HCT116 (cell line): ENCODE measurements at regions of chr3 and their contacts with region 1.

Region 1: DNA sequence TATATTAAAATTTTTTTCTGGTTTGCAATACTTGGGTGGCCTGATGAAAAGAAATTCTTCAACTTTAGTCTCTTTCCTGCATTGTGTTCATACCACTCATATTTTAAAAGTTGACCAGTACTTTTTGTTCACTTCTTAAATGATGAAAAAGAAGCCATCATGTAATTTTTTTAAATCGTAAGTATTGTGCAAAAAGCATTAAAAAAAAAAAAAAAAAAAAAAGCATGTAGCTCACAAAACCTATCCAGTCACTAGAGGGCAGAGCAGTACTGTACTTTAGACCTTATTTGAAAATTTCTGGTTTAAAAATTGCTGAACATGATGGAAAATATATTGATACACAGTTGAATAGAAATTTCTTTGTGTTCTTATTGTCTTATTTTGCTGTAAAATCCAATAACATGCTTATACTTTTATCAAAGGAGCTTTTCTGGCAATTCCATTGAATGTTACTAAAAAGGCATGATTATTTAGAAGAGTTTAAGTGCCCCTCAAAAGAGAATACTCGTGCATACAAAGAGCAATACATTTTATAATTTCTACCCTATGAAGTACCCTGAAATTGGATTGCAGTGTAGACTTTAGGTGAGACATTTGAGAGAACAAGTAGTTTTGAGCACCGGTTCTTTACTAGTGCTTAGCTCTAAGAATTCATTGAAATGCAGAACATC is 137.7 kb downstream of the BBX start:
- DNase-seq: peak; percentile 19
- ATAC-seq: no peak
- H3K4me3 ChIP-seq: no peak overlapping the region
- H3K27ac ChIP-seq: no peak overlapping the region
- H3K4me1 ChIP-seq: no peaks in the 10 kb centered on the region
- H3K27me3 ChIP-seq: no peaks in the 10 kb centered on the region
- CTCF ChIP-seq: peak; percentile 24 to 75 (median 60); a peak in 5 of 6 replicates
- POLR2A ChIP-seq: no peak
- RAD21 ChIP-seq: peak; percentile 42; the same call in 1 of the 2 replicates

Region 2: GRCh38 chr3:107643038-107643883 is 17.2 kb before region 1 on chr3:
- CTCF ChIA-PET with region 1: interaction called, 15 read pairs
- POLR2A ChIA-PET with region 1: no interaction called
- RAD21 ChIA-PET with region 1: no interaction called
- intact Hi-C with region 1: no loop called
- DNase-seq: no peak
- ATAC-seq: peak; percentile 83
- H3K4me3 ChIP-seq: no peak overlapping the region
- H3K27ac ChIP-seq: no peak overlapping the region
- H3K4me1 ChIP-seq: peaks cover 0 to 6% of the 10 kb centered on the region in 2 experiments; a peak in 2 of 4 replicates
- H3K27me3 ChIP-seq: no peaks in the 10 kb centered on the region
- CTCF ChIP-seq: peak in 1 of 3 experiments; percentile 36; a peak in 3 of 6 replicates
- POLR2A ChIP-seq: no peak
- RAD21 ChIP-seq: no peak

Region 3: DNA sequence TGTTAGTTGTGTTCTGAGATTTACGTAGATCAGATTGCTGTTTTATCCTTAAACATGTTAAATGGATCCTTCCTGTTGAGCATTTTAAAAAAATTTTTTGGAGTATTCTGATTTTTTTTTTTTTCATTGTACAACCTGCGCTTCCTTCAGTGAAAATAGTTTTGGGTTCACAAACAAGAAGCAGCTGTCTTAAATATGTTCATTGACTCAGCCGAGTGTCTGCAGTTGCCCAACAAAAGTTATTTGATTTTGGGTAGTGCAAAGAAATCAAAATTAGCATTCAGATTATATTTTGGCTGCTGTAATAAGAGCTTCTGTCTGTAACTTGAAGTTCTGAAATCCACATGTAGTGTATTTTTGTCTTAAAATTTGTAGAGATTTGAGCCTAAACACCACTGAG is 10.5 kb after region 1 on chr3:
- CTCF ChIA-PET with region 1: interaction called, 34 read pairs
- POLR2A ChIA-PET with region 1: no interaction called
- RAD21 ChIA-PET with region 1: no interaction called
- intact Hi-C with region 1: no loop called
- DNase-seq: no peak
- ATAC-seq: no peak
- H3K4me3 ChIP-seq: no peak overlapping the region
- H3K27ac ChIP-seq: no peak overlapping the region
- H3K4me1 ChIP-seq: no peaks in the 10 kb centered on the region
- H3K27me3 ChIP-seq: no peaks in the 10 kb centered on the region
- CTCF ChIP-seq: no peak
- POLR2A ChIP-seq: no peak
- RAD21 ChIP-seq: no peak

Region 4: GRCh38 chr3:107676469-107677309 is 16.2 kb after region 1 on chr3:
- CTCF ChIA-PET with region 1: interaction called, 34 read pairs
- POLR2A ChIA-PET with region 1: no interaction called
- RAD21 ChIA-PET with region 1: no interaction called
- intact Hi-C with region 1: no loop called
- DNase-seq: peak; percentile 4
- ATAC-seq: peak; percentile 64
- H3K4me3 ChIP-seq: no peak overlapping the region
- H3K27ac ChIP-seq: no peak overlapping the region
- H3K4me1 ChIP-seq: no peaks in the 10 kb centered on the region
- H3K27me3 ChIP-seq: no peaks in the 10 kb centered on the region
- CTCF ChIP-seq: peak; percentile 31 to 58 (median 35); a peak in 5 of 6 replicates
- POLR2A ChIP-seq: no peak
- RAD21 ChIP-seq: peak; percentile 54

Region 5: DNA sequence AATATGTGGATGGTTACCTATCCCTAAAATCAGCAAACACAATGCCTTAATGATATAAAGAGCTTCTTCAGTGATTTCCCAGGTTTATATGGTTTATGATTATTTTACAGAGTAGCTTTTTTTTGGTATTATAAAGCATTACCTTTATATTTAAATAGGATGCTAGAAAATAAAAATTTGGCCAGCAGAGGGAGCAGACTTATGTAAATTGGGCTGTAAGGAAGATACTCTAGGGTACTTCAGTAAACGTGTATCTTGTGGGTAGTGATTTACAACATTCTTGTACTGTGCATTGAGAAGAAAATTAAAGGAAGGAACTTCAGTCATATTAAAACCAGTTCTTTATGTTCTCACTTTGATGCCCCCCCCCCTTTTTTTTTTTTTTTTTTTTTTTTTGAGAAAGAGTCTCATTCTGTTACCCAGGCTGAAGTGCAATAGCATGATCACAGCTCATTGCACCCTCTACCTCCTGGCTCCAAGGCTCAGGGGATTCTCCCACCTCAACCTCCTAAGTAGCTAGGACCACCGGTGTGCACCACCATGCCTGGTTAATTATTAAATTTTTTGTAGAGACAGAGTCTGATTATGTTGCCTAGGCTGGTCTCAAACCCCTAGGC is 30.2 kb after region 1 on chr3:
- CTCF ChIA-PET with region 1: interaction called, 11 read pairs
- POLR2A ChIA-PET with region 1: no interaction called
- RAD21 ChIA-PET with region 1: no interaction called
- intact Hi-C with region 1: no loop called
- DNase-seq: peak; percentile 28
- ATAC-seq: peak; percentile 47; the same call in 1 of the 2 replicates
- H3K4me3 ChIP-seq: no peak overlapping the region
- H3K27ac ChIP-seq: no peak overlapping the region
- H3K4me1 ChIP-seq: no peaks in the 10 kb centered on the region
- H3K27me3 ChIP-seq: no peaks in the 10 kb centered on the region
- CTCF ChIP-seq: peak; percentile 9 to 65 (median 39); a peak in 4 of 6 replicates
- POLR2A ChIP-seq: no peak
- RAD21 ChIP-seq: peak; percentile 24; the same call in 1 of the 2 replicates